Common myeloid progenitor, CD34-positive (primary cell): ENCODE measurements at regions of chr1 and their contacts with region 1.

Region 1: DNA sequence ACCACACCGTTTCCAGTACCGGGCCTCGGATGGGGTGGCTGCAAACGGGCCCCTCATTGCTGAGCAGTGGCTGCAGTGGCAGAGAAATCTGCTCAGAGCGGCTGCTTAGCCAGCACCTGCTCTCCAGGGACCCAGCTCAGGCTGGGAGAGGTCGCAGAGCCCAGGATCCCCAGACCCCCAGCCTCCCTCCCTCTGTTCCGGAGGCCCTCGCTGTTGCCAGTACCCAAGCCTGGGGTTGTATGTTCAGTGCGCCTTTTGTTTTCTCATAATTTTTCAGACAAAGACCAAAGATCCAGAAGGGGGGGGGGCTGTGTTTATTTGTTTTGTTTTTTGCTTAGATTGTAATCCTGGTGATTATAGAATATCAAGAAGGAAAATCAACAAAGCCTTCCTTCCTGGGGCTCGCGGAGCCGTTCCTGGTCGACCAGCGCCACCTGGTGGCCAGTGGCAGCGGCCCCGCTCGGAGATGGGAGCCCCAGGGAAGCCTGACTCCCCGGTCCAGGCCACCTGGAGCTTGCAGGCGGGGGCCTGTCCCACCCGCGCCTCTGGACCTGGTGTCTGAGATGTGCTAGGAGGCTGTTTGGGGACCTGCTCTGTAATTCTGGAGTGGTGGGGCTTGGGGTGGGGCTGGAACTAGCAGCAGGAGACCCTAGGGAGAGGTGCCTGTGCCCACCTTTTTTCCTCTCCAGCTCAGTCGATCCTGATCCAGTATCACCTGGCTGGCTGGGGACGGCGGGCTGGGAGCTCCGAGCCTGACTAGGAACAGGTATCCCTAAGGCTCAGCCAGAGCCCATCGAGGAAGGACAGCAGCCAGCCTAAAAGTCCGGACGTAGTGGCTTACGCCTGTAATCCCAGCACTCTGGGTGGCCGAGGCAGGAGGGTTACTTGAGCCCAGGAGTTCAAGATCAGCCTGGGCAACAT is 123.9 kb upstream of the VAMP3 start:
- DNase-seq: peak; percentile 49 to 62 (median 58)
- H3K4me3 ChIP-seq: no peak overlapping the region
- H3K27ac ChIP-seq: no peak overlapping the region
- H3K4me1 ChIP-seq: peaks cover 0 to 78% (median 52%) of the 10 kb centered on the region in 4 experiments
- H3K27me3 ChIP-seq: no peaks in the 10 kb centered on the region

Region 2: DNA sequence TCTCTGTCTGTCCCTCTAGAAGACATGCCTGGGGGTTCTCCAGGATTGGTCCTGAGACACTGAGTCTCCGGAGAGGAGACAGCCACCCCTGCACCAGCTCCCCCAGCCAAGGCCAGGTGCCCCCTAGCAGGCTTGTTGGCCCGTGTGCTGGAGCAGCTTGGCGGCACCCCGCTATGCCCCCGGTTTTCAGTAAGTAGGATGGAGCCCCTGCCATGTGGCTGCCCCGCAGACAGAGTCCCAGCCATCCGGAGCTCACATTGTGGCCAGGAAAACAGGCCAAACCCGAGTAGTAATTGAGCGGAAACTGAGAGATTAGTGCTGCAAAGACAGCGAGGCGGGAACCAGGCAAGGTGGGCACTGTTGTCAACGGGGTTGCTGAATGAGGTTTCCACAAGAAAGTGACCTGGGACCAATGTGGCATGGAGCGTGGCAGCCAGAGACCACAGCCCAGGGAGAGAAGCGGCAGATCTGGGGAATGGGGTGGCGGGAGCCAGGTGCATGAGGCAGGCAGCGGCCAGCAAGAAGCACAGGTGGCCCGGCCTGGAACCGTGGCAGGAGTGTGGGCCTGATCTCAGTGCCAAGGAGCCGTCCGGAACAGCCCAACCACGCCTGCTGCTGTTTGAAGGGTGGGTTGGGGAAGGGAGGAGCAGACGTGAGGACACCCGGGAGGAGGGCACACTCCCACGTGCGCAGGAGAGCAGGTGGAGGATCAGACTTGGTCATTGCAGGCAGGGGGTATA is 13.6 kb before region 1 on chr1:
- CTCF ChIA-PET with region 1: interaction called, 21 read pairs
- POLR2A ChIA-PET with region 1: interaction called, 8 read pairs
- DNase-seq: no peak
- H3K4me3 ChIP-seq: no peak overlapping the region
- H3K27ac ChIP-seq: no peak overlapping the region
- H3K4me1 ChIP-seq: peaks cover 0 to 47% (median 17%) of the 10 kb centered on the region in 4 experiments
- H3K27me3 ChIP-seq: no peaks in the 10 kb centered on the region

Region 3: GRCh38 chr1:7659514-7659913 is 12.3 kb after region 1 on chr1:
- CTCF ChIA-PET with region 1: interaction called, 70 read pairs
- POLR2A ChIA-PET with region 1: no interaction called
- DNase-seq: no peak
- H3K4me3 ChIP-seq: no peak overlapping the region
- H3K27ac ChIP-seq: no peak overlapping the region
- H3K4me1 ChIP-seq: peaks cover 0 to 7% (median 3%) of the 10 kb centered on the region in 4 experiments
- H3K27me3 ChIP-seq: peaks cover 0 to 2% (median 0%) of the 10 kb centered on the region in 5 experiments